Caco-2 (cell line): ENCODE measurements at regions of chr5 and their contacts with region 1.

Region 1: GRCh38 chr5:150621301-150621700 is 19.2 kb upstream of the SYNPO start:
- DNase-seq: no peak
- H3K4me3 ChIP-seq: no peak overlapping the region
- H3K4me3 Mint-ChIP-seq: no peak overlapping the region
- H3K27ac Mint-ChIP-seq: no peak overlapping the region
- H3K4me1 ChIP-seq: peaks cover 8% of the 10 kb centered on the region
- H3K4me1 Mint-ChIP-seq: peaks cover 13% of the 10 kb centered on the region
- H3K27me3 ChIP-seq: no peaks in the 10 kb centered on the region
- H3K27me3 Mint-ChIP-seq: no peaks in the 10 kb centered on the region
- CTCF ChIP-seq: no peak

Region 2: GRCh38 chr5:149357370-149358293 is 1263.7 kb before region 1 on chr5 and contains the start of gene PCYOX1L:
- CTCF ChIA-PET with region 1: no interaction called
- POLR2A ChIA-PET with region 1: no interaction called
- intact Hi-C with region 1: no loop called
- DNase-seq: peak; percentile 95 to 97
- H3K4me3 ChIP-seq: peak within 1 kb of the TSS; percentile 68
- H3K4me3 Mint-ChIP-seq: peak within 1 kb of the TSS; percentile 90
- H3K27ac Mint-ChIP-seq: no peak within 1 kb of the TSS
- H3K4me1 ChIP-seq: peaks cover 6% of the 10 kb centered on the region
- H3K4me1 Mint-ChIP-seq: no peaks in the 10 kb centered on the region
- H3K27me3 ChIP-seq: no peaks in the 10 kb centered on the region
- H3K27me3 Mint-ChIP-seq: no peaks in the 10 kb centered on the region
- CTCF ChIP-seq: no peak
- total RNA-seq, gene PCYOX1L: 8.7 and 10.4 TPM in 2 replicates

Region 3: DNA sequence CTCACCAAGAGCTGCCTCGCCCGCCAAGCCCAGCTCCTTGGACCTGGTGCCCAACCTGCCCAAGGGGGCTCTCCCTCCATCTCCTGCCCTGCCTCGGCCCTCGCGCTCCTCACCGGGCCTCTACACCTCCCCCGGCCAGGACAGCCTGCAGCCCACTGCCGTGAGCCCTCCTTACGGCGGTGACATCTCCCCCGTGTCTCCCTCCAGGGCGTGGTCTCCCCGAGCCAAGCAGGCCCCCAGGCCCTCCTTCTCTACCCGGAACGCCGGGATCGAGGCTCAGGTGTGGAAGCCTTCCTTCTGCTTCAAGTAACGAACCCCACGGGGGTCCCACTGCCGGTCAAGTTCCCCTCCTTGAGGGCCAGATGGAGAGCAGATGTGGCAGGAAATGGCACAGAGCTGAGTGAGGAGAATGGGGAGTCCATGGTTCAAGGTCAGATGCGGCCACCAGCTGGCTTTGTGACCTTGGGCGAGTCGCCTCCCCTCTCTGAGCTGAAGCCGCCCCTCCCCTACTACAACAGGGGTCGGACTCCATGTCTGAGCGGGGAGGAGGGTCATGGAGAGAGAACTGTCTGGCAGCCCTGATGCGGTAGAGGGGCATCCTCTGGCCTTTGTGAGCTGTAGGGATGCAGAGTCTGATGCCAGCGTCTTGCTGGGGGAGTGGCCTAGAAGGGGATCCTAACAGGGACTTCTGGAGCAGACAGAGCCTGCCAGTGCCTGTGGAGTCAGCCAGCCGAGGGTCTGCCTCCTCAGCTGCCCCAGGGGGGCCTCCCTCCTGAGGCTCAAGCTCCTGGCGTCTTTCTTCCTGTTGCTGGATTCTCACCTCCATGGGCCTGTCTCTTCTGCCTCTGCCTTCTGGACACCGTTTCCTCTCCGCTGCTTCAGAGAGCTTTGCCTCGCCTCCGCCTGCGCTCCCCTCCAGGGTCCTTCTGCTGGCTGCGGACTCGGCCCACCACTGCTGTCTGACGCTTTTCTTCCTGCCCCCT is 29.0 kb after region 1 on chr5:
- CTCF ChIA-PET with region 1: no interaction called
- POLR2A ChIA-PET with region 1: interaction called, 12 read pairs
- intact Hi-C with region 1: no loop called
- DNase-seq: no peak
- H3K4me3 ChIP-seq: no peak overlapping the region
- H3K4me3 Mint-ChIP-seq: no peak overlapping the region
- H3K27ac Mint-ChIP-seq: no peak overlapping the region
- H3K4me1 ChIP-seq: no peaks in the 10 kb centered on the region
- H3K4me1 Mint-ChIP-seq: peaks cover 16% of the 10 kb centered on the region
- H3K27me3 ChIP-seq: no peaks in the 10 kb centered on the region
- H3K27me3 Mint-ChIP-seq: no peaks in the 10 kb centered on the region
- CTCF ChIP-seq: no peak